ENCODE measurements at regions of chr10 and their contacts with region 1.

Region 1: GRCh38 chr10:24920907-24921881 is 31.2 kb downstream of the PRTFDC1 start:
- DNase-seq: peak; percentile 25
- H3K4me3 Mint-ChIP-seq: no peak overlapping the region
- H3K27ac Mint-ChIP-seq: peak overlapping the region; percentile 85
- H3K4me1 Mint-ChIP-seq: peaks cover 25% of the 10 kb centered on the region
- H3K27me3 Mint-ChIP-seq: no peaks in the 10 kb centered on the region

Region 2: GRCh38 chr10:24866604-24867583 is 54.3 kb before region 1 on chr10:
- intact Hi-C with region 1: loop called (anchors 5 kb)
- DNase-seq: no peak
- H3K4me3 Mint-ChIP-seq: no peak overlapping the region
- H3K27ac Mint-ChIP-seq: peak overlapping the region; percentile 43
- H3K4me1 Mint-ChIP-seq: peaks cover 26% of the 10 kb centered on the region
- H3K27me3 Mint-ChIP-seq: no peaks in the 10 kb centered on the region

Region 3: GRCh38 chr10:24887855-24888231 is 33.4 kb before region 1 on chr10:
- intact Hi-C with region 1: loop called (anchors 5 kb)
- DNase-seq: no peak
- H3K4me3 Mint-ChIP-seq: no peak overlapping the region
- H3K27ac Mint-ChIP-seq: peak overlapping the region; percentile 64
- H3K4me1 Mint-ChIP-seq: peaks cover 27% of the 10 kb centered on the region
- H3K27me3 Mint-ChIP-seq: no peaks in the 10 kb centered on the region